T-cell (primary cell): ENCODE measurements at regions of chr13 and their contacts with region 1.

Region 1: DNA sequence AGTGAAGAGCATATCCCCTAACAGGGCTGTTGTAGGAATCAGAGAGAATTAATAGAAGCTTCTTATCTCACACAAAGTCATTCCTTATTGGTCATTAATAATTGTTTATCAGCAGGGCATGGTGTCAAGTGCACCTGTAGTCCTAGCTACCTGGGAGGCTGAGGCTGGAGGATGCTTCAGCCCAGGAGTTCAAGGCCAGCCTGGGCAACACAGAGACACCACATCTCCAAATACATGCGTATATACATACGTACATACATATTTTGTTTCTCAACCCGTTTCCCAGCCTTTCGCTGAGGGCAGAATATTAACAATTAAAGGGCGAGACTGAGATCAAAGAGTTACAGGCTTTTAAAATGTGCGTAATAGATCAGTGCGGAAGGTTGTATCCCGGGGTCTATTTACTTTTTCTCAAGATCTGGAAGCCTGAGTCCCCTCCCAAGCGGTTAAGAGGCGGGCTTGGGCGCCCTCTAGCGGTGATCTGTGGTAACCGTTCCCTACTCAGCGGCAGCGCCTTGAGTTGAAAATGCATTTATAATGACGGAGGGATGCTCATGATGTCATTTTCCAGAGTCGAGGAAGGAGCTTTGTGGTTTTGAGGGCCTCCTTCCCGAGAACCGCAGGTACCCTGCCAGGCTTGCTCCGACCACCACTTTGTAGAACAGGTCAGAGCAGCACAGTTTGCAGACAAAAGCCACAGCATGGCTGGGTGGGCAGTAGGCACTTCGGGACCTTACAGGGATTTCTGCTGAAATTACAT is 169.6 kb upstream of the GPR12 start:
- DNase-seq: peak; percentile 12 to 74 (median 55)
- ATAC-seq: peak in 3 of 4 experiments; percentile 55 to 64 (median 62)
- H3K4me3 ChIP-seq: no peak overlapping the region
- H3K4me3 Mint-ChIP-seq: no peak overlapping the region
- H3K27ac ChIP-seq: no peak overlapping the region
- H3K27ac Mint-ChIP-seq: no peak overlapping the region
- H3K4me1 ChIP-seq: peaks cover 0 to 6% of the 10 kb centered on the region in 2 experiments
- H3K4me1 Mint-ChIP-seq: peaks cover 0 to 5% (median 3%) of the 10 kb centered on the region in 3 donors
- H3K27me3 ChIP-seq: peaks cover 0 to 19% of the 10 kb centered on the region in 2 experiments
- H3K27me3 Mint-ChIP-seq: peaks cover 3 to 4% of the 10 kb centered on the region in 2 donors

Region 2: DNA sequence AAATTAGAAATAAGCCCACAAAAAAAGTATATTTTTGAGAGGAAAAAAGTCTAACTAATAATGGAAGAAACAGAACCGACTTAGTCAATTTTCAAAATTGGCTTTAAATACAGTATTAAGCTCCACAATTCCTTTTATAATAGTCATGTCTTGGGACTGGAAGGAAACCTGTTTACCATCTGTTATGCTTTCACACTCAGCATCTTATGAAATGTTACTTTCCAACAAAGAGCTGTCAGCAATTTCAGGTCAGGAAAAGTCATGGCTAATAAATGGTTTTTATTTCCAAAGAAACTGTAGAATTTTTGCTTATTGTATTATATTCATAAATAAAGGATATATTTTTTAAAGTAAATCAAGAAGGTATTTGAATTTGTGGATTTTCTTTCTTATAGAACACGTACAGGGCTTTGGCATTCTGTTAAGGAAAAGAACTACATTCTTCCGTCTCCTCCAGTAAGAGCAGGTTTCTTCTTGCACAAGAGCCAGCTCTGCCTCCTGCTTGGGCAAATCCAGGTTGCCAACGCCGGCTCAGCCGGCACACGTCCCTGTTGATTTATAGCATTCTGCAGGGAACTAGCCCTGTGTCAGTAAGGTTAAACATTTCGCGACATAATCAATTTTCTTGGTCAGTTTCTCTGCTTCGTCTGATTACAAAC is 116.7 kb before region 1 on chr13:
- CTCF ChIA-PET with region 1: no interaction called
- POLR2A ChIA-PET with region 1: no interaction called
- DNase-seq: no peak
- ATAC-seq: no peak
- H3K4me3 ChIP-seq: no peak overlapping the region
- H3K4me3 Mint-ChIP-seq: no peak overlapping the region
- H3K27ac ChIP-seq: no peak overlapping the region
- H3K27ac Mint-ChIP-seq: no peak overlapping the region
- H3K4me1 ChIP-seq: no peaks in the 10 kb centered on the region
- H3K4me1 Mint-ChIP-seq: no peaks in the 10 kb centered on the region
- H3K27me3 ChIP-seq: peaks cover 2 to 23% of the 10 kb centered on the region in 2 experiments
- H3K27me3 Mint-ChIP-seq: peaks cover 26 to 36% of the 10 kb centered on the region in 2 donors

Region 3: DNA sequence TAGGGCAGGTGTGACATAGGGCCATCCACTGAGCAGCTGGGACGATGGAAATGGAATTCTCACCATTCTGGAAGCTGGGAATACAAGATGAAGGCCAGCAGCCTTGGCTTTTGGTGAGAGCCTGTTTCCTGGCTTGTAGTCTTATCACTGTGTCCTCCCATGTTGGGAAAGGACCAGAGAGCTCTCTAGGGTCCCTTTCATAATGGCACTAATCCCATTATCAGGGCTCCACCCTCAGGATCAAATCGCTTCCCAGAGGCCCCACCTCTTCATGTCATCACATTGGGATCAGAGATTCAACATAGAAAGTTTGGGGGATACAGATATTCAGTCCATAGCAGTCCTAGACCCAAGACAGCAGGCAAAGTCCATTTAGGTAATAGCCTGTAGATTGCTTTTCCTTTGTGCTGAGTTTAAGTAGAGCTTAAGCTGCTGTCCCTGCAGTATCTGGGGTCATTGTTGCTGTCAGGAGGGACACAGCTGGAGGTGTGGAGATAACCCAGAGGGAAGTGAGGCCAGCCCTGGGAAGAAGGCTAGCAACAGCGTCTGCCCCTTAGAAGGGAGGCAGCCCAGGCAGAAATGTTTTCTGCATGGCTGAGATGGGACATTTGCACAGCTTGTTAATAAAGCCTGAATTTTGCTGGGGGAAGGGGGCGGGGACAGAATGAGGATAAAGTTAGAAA is 33.0 kb before region 1 on chr13:
- CTCF ChIA-PET with region 1: no interaction called
- POLR2A ChIA-PET with region 1: no interaction called
- DNase-seq: no peak
- ATAC-seq: no peak
- H3K4me3 ChIP-seq: no peak overlapping the region
- H3K4me3 Mint-ChIP-seq: no peak overlapping the region
- H3K27ac ChIP-seq: no peak overlapping the region
- H3K27ac Mint-ChIP-seq: no peak overlapping the region
- H3K4me1 ChIP-seq: no peaks in the 10 kb centered on the region
- H3K4me1 Mint-ChIP-seq: no peaks in the 10 kb centered on the region
- H3K27me3 ChIP-seq: peaks cover 2 to 21% of the 10 kb centered on the region in 2 experiments
- H3K27me3 Mint-ChIP-seq: peaks cover 18 to 34% of the 10 kb centered on the region in 2 donors

Region 4: GRCh38 chr13:26914624-26915023 is 15.5 kb before region 1 on chr13:
- CTCF ChIA-PET with region 1: interaction called in 1 of 2 experiments, 15 read pairs
- POLR2A ChIA-PET with region 1: no interaction called
- DNase-seq: peak in 3 of 35 experiments; percentile 2 to 5 (median 3)
- ATAC-seq: no peak
- H3K4me3 ChIP-seq: no peak overlapping the region
- H3K4me3 Mint-ChIP-seq: no peak overlapping the region
- H3K27ac ChIP-seq: no peak overlapping the region
- H3K27ac Mint-ChIP-seq: no peak overlapping the region
- H3K4me1 ChIP-seq: peaks cover 0 to 3% of the 10 kb centered on the region in 2 experiments
- H3K4me1 Mint-ChIP-seq: peaks cover 4 to 8% (median 7%) of the 10 kb centered on the region in 3 donors
- H3K27me3 ChIP-seq: peaks cover 0 to 15% of the 10 kb centered on the region in 2 experiments
- H3K27me3 Mint-ChIP-seq: peaks cover 5 to 10% of the 10 kb centered on the region in 2 donors

Region 5: DNA sequence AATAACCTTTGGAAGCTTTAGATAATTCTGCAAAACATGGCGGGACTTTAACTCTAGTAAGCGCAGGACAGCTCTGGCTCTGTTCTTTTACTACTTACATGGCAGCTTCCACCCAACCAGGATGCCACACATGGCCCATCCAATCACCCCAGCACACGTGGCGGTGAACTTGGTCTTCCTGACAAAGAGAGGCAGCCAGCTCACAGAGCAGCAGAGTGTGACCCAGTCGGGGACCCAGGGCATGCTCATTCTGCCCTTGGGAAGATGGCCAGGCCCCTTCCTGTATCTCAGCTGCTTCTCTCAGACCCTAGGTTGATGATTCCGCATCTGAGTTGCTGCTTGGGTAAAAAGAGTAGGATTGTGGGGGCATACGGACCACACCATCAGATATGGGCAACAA is 69.3 kb after region 1 on chr13:
- CTCF ChIA-PET with region 1: interaction called in 1 of 2 experiments, 14 read pairs
- POLR2A ChIA-PET with region 1: no interaction called
- DNase-seq: no peak
- ATAC-seq: no peak
- H3K4me3 ChIP-seq: no peak overlapping the region
- H3K4me3 Mint-ChIP-seq: no peak overlapping the region
- H3K27ac ChIP-seq: no peak overlapping the region
- H3K27ac Mint-ChIP-seq: no peak overlapping the region
- H3K4me1 ChIP-seq: no peaks in the 10 kb centered on the region
- H3K4me1 Mint-ChIP-seq: peaks cover 0 to 3% (median 2%) of the 10 kb centered on the region in 3 donors
- H3K27me3 ChIP-seq: peaks cover 0 to 15% of the 10 kb centered on the region in 2 experiments
- H3K27me3 Mint-ChIP-seq: peaks cover 32 to 37% of the 10 kb centered on the region in 2 donors